Activated CD8-positive, alpha-beta T cell treated with anti-CD3 and anti-CD28 coated beads, Interleukin-2, amount 10 ng/mL, durations not matched to agents 7 days and 5 days (primary cell): ENCODE measurements at regions of chr12 and their contacts with region 1.

Region 1: DNA sequence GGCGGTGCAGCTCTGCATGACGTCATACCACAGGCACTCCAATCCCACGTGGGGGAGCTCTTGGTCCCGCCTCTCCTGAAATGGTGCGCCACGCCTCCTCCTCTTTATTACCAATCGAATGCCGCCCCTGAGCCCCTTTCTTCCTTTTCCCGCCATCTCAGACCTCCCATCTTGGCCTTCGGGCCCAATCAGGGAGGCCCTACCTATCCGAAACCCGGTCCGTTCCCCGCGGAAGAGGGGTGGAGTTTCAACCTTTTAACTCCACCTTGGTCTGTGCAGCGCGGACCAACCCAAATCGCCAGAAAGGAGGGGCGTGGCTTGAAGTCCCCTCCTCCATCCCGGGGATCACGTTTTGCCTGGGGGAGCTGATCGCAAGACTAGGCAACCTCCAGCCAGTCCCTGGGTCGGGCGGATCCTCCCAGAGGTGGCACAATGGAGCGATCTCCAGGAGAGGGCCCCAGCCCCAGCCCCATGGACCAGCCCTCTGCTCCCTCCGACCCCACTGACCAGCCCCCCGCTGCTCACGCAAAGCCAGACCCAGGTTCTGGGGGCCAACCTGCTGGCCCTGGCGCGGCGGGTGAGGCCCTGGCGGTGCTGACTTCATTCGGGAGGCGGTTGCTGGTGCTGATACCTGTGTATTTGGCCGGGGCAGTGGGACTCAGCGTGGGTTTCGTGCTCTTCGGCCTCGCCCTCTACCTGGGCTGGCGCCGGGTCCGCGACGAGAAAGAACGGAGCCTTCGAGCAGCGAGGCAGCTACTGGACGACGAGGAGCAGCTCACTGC is at the start of gene ESYT1:
- DNase-seq: peak; percentile 100
- ATAC-seq: peak; percentile 91
- H3K4me3 Mint-ChIP-seq: peak within 1 kb of the TSS; percentile 88
- H3K27ac Mint-ChIP-seq: peak within 1 kb of the TSS; percentile 91
- H3K4me1 Mint-ChIP-seq: peaks cover 70% of the 10 kb centered on the region
- H3K27me3 Mint-ChIP-seq: no peaks in the 10 kb centered on the region
- total RNA-seq, gene ESYT1: 317 to 333 TPM

Region 2: GRCh38 chr12:56087220-56087619 is 40.9 kb before region 1 on chr12:
- CTCF ChIA-PET with region 1: no interaction called
- POLR2A ChIA-PET with region 1: no interaction called
- DNase-seq: no peak
- ATAC-seq: no peak
- H3K4me3 Mint-ChIP-seq: no peak overlapping the region
- H3K27ac Mint-ChIP-seq: no peak overlapping the region
- H3K4me1 Mint-ChIP-seq: peaks cover 19% of the 10 kb centered on the region
- H3K27me3 Mint-ChIP-seq: peaks cover 9% of the 10 kb centered on the region

Region 3: DNA sequence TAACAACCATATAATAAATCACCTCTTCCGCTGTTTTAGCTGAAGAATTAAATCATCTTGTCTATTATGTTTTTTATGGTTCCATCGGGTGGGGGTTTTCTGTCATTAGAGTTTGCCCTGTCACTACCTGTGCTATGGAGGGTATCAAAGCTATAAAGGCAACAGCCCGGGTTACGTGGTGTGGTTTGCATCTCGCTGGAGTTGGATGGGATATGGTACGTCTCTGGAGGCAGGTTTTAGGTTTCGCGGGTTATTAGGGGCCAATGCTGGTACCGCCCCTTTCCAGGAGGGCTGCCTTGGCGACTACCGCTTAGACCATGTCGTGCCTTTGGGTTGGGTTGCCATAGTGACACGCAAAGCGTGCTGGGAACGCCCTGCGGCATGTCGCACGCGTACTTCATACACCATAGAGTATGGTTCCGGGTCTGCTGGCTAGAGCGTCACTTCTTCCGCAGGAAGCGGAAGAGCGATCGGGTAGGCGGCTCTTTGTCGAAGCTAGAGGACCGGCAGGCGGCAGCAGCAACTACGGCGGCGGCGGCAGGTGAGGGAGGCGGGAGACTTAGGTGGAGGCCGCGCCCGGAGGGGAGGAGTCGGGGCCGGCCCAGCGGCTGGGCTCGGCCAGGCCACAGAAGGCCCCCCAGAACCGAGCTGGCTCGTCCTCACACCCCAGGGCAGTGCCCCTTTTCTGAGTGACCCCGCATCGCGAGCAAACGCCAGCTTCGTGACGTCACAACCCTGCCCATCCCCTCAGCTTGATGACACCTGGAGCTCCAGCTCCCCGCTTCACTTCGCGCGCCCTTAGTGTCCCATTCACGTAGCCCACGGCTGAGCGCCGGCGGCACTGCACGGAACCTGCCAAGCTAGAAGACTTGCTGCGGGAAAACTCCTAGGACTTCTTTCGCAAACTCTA is 10.0 kb before region 1 on chr12 and contains the start of gene ZC3H10:
- CTCF ChIA-PET with region 1: interaction called, 58 read pairs
- POLR2A ChIA-PET with region 1: interaction called, 54 read pairs
- DNase-seq: peak; percentile 100
- ATAC-seq: peak; percentile 76
- H3K4me3 Mint-ChIP-seq: peak within 1 kb of the TSS; percentile 100
- H3K27ac Mint-ChIP-seq: peak within 1 kb of the TSS; percentile 100
- H3K4me1 Mint-ChIP-seq: peaks cover 39% of the 10 kb centered on the region
- H3K27me3 Mint-ChIP-seq: no peaks in the 10 kb centered on the region
- total RNA-seq, gene ZC3H10: 9.1 to 10.6 TPM

Region 4: DNA sequence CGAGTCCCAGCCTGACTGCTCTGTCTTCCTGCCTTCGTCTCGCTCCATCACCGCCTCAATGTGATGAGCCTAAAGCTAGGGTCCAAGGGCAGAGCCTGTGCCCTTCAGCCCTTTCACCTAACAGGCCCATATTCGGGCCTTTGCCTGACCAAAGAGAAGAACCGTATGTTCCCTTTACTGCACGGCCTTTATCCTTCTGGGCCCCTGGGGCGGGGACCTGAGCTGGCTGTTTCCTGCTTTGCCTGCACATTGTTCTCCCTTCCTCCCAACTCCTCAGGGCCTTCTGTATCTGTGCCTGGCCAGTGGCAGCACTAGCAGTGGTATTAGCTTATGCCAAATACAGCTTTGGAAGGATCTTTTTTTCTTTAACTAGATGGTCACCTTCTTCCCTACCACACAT is 15.8 kb after region 1 on chr12:
- CTCF ChIA-PET with region 1: interaction called, 11 read pairs
- POLR2A ChIA-PET with region 1: interaction called, 30 read pairs
- DNase-seq: no peak
- ATAC-seq: no peak
- H3K4me3 Mint-ChIP-seq: no peak overlapping the region
- H3K27ac Mint-ChIP-seq: peak overlapping the region; percentile 68
- H3K4me1 Mint-ChIP-seq: peaks cover 41% of the 10 kb centered on the region
- H3K27me3 Mint-ChIP-seq: no peaks in the 10 kb centered on the region

Region 5: GRCh38 chr12:56152318-56153033 is 24.4 kb after region 1 on chr12 and contains the start of gene MYL6B:
- CTCF ChIA-PET with region 1: interaction called, 33 read pairs
- POLR2A ChIA-PET with region 1: interaction called, 23 read pairs
- DNase-seq: peak; percentile 97
- ATAC-seq: peak; percentile 91
- H3K4me3 Mint-ChIP-seq: peak within 1 kb of the TSS; percentile 92
- H3K27ac Mint-ChIP-seq: peak within 1 kb of the TSS; percentile 99
- H3K4me1 Mint-ChIP-seq: peaks cover 60% of the 10 kb centered on the region
- H3K27me3 Mint-ChIP-seq: no peaks in the 10 kb centered on the region
- total RNA-seq, gene MYL6B: 60.0 to 60.7 TPM

Region 6: GRCh38 chr12:56413392-56413791 is 285.3 kb after region 1 on chr12:
- CTCF ChIA-PET with region 1: no interaction called
- POLR2A ChIA-PET with region 1: no interaction called
- DNase-seq: no peak
- ATAC-seq: no peak
- H3K4me3 Mint-ChIP-seq: no peak overlapping the region
- H3K27ac Mint-ChIP-seq: no peak overlapping the region
- H3K4me1 Mint-ChIP-seq: no peaks in the 10 kb centered on the region
- H3K27me3 Mint-ChIP-seq: no peaks in the 10 kb centered on the region

Region 7: DNA sequence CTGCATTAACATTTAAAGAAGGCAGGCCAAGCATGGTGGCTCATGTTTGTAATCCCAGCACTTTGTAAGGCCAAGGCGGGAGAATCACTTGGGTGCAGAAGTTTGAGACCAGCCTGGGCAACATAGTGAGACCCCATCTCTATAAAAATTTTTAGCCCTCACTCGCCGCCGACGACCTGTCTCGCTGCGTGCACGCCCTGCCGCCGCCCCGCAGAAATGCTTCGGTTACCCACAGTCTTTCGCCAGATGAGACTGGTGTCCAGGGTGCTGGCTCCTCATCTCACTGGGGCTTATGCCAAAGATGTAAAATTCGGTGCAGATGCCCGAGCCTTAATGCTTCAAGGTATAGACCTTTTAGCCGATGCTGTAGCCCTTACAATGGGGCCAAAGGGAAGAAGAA is 382.7 kb after region 1 on chr12:
- CTCF ChIA-PET with region 1: no interaction called
- POLR2A ChIA-PET with region 1: no interaction called
- DNase-seq: no peak
- ATAC-seq: no peak
- H3K4me3 Mint-ChIP-seq: no peak overlapping the region
- H3K27ac Mint-ChIP-seq: no peak overlapping the region
- H3K4me1 Mint-ChIP-seq: no peaks in the 10 kb centered on the region
- H3K27me3 Mint-ChIP-seq: peaks cover 8% of the 10 kb centered on the region